Heart left ventricle (tissue), 16 donors: ENCODE measurements at regions of chr1 and their contacts with region 1.

Region 1: GRCh38 chr1:7070389-7071029 is 285.3 kb downstream of the CAMTA1 start:
- DNase-seq: peak in 4 of 5 donors; percentile 55 to 64 (median 62)
- ATAC-seq: peak in 3 of 4 donors; percentile 74 to 90 (median 78)
- H3K4me3 ChIP-seq: peak overlapping the region in 11 of 12 donors; percentile 7 to 54 (median 33)
- H3K27ac ChIP-seq: no peak overlapping the region
- H3K4me1 ChIP-seq: peaks cover 0 to 7% (median 5%) of the 10 kb centered on the region in 12 donors
- H3K27me3 ChIP-seq: peaks cover 0 to 5% (median 0%) of the 10 kb centered on the region in 9 donors
- CTCF ChIP-seq: peak; percentile 68 to 90 (median 80)
- POLR2A ChIP-seq: no peak

Region 2: GRCh38 chr1:6794164-6794563 is 276.3 kb before region 1 on chr1:
- intact Hi-C with region 1: loop called in 9 of 10 experiments (anchors 2 to 10 kb)
- DNase-seq: no peak
- ATAC-seq: no peak
- H3K4me3 ChIP-seq: no peak overlapping the region
- H3K27ac ChIP-seq: no peak overlapping the region
- H3K4me1 ChIP-seq: peaks cover 4 to 67% (median 37%) of the 10 kb centered on the region in 12 donors
- H3K27me3 ChIP-seq: no peaks in the 10 kb centered on the region
- CTCF ChIP-seq: peak in 11 of 12 donors; percentile 14 to 61 (median 52)
- POLR2A ChIP-seq: no peak

Region 3: DNA sequence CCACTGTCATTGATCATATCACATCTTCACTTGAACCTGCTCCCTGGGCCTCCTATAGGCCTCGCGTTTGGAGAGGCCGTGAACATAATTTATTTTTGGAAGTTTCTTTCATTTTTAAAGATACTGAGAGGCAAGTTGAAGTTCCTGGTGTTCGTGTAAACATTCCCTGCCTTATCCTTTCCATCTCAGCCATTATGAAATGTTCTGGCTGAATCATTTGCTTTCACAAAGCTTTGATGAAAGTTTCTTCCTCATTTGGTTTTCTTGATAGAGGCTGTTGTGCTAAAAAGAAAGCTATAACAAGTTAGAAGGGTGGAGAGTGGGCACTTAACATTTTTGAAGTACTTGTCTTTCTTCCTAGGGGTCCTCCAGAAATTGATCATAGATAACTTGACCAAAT is 269.8 kb before region 1 on chr1:
- intact Hi-C with region 1: loop called in 5 of 10 experiments (anchors 2 to 10 kb)
- DNase-seq: no peak
- ATAC-seq: no peak
- H3K4me3 ChIP-seq: no peak overlapping the region
- H3K27ac ChIP-seq: peak overlapping the region in 11 of 12 donors; percentile 19 to 71 (median 53)
- H3K4me1 ChIP-seq: peaks cover 6 to 73% (median 53%) of the 10 kb centered on the region in 12 donors
- H3K27me3 ChIP-seq: no peaks in the 10 kb centered on the region
- CTCF ChIP-seq: no peak
- POLR2A ChIP-seq: no peak

Region 4: GRCh38 chr1:6889875-6890480 is 180.5 kb before region 1 on chr1:
- intact Hi-C with region 1: loop called in 1 of 10 experiments (anchors 5 kb)
- DNase-seq: peak in 4 of 5 donors; percentile 38 to 52 (median 45)
- ATAC-seq: peak; percentile 37 to 84 (median 68)
- H3K4me3 ChIP-seq: no peak overlapping the region
- H3K27ac ChIP-seq: no peak overlapping the region
- H3K4me1 ChIP-seq: peaks cover 0 to 9% (median 0%) of the 10 kb centered on the region in 12 donors
- H3K27me3 ChIP-seq: no peaks in the 10 kb centered on the region
- CTCF ChIP-seq: peak; percentile 67 to 90 (median 80)
- POLR2A ChIP-seq: no peak

Region 5: GRCh38 chr1:6998267-6998666 is 72.2 kb before region 1 on chr1:
- intact Hi-C with region 1: loop called in 3 of 10 experiments (anchors 1 to 5 kb)
- DNase-seq: peak in 3 of 5 donors; percentile 27 to 59 (median 47)
- ATAC-seq: peak; percentile 71 to 96 (median 93)
- H3K4me3 ChIP-seq: no peak overlapping the region
- H3K27ac ChIP-seq: no peak overlapping the region
- H3K4me1 ChIP-seq: no peaks in the 10 kb centered on the region
- H3K27me3 ChIP-seq: no peaks in the 10 kb centered on the region
- CTCF ChIP-seq: peak in 10 of 12 donors; percentile 22 to 53 (median 37)
- POLR2A ChIP-seq: no peak

Region 6: GRCh38 chr1:7207875-7208646 is 137.6 kb after region 1 on chr1:
- intact Hi-C with region 1: loop called in 1 of 10 experiments (anchors 10 kb)
- DNase-seq: peak in 4 of 5 donors; percentile 31 to 63 (median 49)
- ATAC-seq: peak; percentile 61 to 89 (median 83)
- H3K4me3 ChIP-seq: no peak overlapping the region
- H3K27ac ChIP-seq: no peak overlapping the region
- H3K4me1 ChIP-seq: no peaks in the 10 kb centered on the region
- H3K27me3 ChIP-seq: peaks cover 0 to 20% (median 0%) of the 10 kb centered on the region in 9 donors
- CTCF ChIP-seq: peak; percentile 43 to 75 (median 64)
- POLR2A ChIP-seq: no peak